Tibial artery (tissue), 4 donors: ENCODE measurements at regions of chr4 and their contacts with region 1.

Region 1: DNA sequence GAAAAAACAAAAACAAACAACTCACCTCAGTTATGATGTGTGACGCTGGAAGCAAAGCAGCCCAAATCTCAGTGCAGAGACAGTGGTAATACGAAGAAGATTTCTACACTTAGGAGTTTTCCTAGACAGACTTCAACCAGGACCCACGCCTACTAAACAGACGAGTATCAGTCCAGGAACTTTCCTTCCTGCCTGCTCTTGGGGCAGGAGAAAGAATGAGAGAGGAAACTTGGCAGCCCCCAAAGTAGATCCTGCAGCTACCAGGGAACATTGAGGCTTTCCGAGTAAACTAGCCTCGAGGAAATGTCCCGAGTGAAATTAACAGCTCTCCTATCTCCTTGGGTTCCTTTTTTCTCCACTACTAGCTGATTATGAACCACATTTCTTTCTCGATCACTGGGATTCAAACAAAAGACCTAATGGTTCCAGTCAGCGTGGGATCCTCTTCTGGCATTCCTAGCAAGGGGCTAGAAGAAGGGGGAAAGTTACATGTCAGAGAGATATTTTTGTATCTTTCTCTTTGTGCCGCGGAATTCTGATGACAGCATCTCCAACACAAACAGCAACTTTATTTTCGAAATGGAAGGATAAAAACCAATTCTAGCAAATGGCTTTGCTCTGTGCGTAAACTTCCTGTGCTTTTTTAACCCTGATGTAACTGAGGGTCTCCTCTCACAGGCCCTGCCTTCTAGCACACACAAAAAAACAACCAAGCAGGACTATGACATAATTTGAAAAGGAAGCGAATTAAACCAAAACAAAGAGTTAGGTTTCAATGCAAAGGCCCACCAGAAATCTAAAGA is 53.2 kb downstream of the PPM1K start:
- DNase-seq: no peak
- H3K4me3 ChIP-seq: peak overlapping the region; percentile 41 to 52
- H3K27ac ChIP-seq: peak overlapping the region; percentile 72 to 77
- H3K4me1 ChIP-seq: peaks cover 0 to 8% (median 3%) of the 10 kb centered on the region in 4 donors
- H3K27me3 ChIP-seq: no peaks in the 10 kb centered on the region
- CTCF ChIP-seq: no peak

Region 2: DNA sequence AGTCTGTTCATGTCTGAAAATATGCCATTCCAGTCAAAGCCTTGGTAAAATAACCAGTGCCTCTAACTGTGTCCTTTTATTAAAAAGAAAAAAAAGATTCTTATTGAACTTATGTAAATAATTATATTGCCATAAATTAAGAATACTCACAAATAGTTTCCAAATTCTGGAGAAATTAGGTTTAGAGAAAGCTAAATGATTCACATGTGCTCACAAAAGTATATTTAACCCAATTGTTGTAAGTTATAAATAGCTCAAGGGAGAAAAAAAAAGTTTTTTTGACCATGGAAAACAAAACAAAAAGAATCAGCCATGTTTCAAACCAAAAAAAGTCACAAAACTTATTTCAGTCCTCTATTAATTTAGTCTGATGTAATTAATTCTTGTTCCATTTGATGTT is 122.2 kb after region 1 on chr4:
- intact Hi-C with region 1: no loop called
- DNase-seq: no peak
- H3K4me3 ChIP-seq: no peak overlapping the region
- H3K27ac ChIP-seq: no peak overlapping the region
- H3K4me1 ChIP-seq: no peaks in the 10 kb centered on the region
- H3K27me3 ChIP-seq: no peaks in the 10 kb centered on the region
- CTCF ChIP-seq: no peak

Region 3: DNA sequence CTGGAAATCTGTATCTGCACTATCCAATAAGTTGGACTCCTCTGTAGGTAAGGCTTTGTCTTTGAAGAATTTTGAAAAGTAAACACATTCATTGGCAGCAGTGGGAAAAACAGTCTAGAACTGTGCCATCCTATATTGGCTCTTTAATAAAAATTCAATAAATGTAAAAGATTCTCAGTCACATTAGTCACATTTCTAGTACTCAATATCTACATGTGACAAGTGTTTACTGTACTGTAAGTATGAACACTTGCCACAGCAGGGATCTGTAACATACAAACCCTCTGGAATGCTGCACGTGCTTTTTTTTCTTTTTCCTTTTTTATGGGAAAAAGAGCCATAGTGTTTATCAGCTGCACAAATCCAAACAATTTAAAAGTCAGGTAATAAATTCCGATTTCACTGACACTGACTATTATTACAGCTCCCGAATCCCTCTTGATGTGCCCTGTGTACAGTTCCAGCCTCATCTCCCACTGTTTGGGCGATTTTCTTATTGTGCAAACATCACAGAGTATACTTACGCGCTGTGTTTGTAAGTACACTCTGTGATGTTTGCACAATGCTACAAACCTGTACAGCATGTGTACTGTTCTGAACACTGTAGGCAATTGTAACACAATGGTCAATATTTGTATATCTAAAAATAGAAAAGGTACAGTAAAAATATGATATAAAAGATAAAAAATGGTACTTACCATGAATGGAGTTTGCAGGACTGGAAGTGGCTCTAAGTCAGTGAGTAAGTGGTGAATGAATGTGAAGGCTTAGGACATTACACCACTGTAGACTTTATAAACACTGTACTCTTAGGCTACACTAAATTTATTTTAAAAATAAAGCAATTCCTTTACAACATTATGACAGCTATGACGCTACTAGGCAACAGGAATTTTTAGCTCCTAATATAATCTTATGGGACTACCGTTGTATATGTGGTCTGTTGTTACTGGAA is 283.7 kb after region 1 on chr4:
- intact Hi-C with region 1: loop called (anchors 5 kb)
- DNase-seq: no peak
- H3K4me3 ChIP-seq: no peak overlapping the region
- H3K27ac ChIP-seq: no peak overlapping the region
- H3K4me1 ChIP-seq: peaks cover 0 to 3% (median 1%) of the 10 kb centered on the region in 4 donors
- H3K27me3 ChIP-seq: no peaks in the 10 kb centered on the region
- CTCF ChIP-seq: no peak